Heart right ventricle (tissue), 16 donors: ENCODE measurements at regions of chr2 and their contacts with region 1.

Region 1: DNA sequence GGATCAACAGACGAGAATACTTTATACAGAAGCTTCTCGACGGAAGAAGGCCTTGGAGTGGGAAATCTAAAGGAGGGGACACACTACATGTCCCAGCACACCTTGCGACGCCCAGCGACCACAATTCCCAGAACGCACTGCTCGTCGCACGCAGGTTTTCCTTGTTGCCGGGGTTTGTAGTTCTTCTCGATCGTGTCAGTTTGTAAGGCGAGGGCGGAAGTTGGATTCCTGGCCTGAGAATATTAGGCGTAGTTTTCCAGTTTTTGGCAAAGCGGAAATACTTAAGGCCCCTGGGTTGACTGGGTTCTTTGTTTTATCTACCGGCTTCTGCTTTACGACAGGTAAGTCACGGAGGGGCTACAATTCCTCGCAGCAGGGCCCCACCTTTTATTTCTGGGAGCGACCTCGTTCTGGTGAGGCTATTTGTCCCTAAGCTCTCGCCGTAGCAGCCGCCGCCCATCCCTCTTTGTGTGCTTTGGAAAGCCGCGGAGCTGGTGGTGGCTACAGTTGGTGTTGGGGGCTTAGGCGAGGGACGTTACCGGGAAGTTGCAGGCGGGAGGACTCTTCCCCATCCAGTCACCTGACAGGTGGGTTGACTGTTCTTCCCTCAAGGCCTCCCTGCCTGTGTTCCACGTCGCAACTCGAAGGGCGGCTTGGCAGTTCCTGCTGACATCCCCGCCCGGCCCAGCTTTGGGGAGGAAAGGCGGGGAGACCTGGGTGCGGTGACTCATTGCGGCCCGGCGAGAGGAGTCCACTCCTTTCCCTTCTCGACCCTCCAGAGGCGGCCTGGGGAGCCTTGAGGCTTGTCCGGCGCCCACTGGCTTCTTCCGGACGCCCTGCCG is at the start of gene DYNC1I2:
- DNase-seq: peak; percentile 87 to 94
- ATAC-seq: peak; percentile 97 to 99 (median 99)
- H3K4me3 ChIP-seq: peak within 1 kb of the TSS; percentile 70 to 97 (median 85)
- H3K27ac ChIP-seq: peak within 1 kb of the TSS; percentile 78 to 92 (median 90)
- H3K4me1 ChIP-seq: peaks cover 0 to 33% (median 19%) of the 10 kb centered on the region in 9 donors
- H3K27me3 ChIP-seq: no peaks in the 10 kb centered on the region
- CTCF ChIP-seq: no peak
- total RNA-seq, gene DYNC1I2: 63.3 to 81.4 (median 72.5) TPM

Region 2: DNA sequence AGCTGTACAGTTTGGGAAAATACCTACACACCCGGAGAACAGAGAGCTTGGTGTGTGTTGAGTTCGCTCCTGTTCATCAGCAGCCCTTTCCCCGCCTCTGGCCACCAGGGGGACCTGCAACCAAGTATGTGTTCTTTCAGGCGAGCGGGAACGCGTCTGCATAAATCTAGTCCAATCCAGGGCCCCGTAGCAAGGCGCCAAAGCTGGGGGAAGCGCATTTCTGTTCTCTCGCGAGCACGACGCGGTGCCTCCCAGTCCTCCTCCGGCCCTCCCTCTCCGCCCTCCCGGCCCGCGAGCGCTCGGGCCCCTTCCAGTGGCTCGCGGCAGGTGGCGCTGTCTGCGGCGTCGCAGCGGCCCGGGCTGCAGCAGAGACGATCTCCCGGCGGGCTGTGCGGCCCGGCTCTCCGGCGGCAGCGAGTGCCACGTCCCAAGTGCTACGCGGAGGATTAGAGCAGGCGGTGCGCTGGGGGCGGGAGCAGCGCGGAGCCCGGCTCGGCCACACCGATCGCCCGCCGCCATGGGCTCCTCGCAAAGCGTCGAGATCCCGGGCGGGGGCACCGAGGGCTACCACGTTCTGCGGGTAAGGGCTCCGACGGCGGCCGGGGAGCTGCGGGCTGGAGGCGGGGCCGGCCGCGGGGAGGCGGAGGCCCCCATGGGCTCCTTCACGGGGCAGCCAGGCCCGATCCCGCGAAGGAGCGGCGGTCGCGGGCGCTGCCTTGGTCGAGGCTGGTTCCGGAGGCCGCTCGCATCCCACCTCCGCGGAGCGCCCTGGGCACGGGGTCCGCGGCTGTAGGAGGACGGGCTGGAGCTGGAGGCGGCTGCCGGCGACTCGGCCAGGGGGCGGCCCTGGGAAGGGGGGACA is 758.5 kb before region 1 on chr2 and contains the start of gene GORASP2:
- intact Hi-C with region 1: loop called in 1 of 10 experiments (anchors 5 kb)
- DNase-seq: peak; percentile 97 to 99
- ATAC-seq: peak; percentile 97 to 99 (median 98)
- H3K4me3 ChIP-seq: peak within 1 kb of the TSS; percentile 73 to 98 (median 88)
- H3K27ac ChIP-seq: peak within 1 kb of the TSS; percentile 82 to 98 (median 94)
- H3K4me1 ChIP-seq: peaks cover 3 to 47% (median 38%) of the 10 kb centered on the region in 9 donors
- H3K27me3 ChIP-seq: no peaks in the 10 kb centered on the region
- CTCF ChIP-seq: peak; percentile 93 to 98 (median 97)
- total RNA-seq, gene GORASP2: 54.2 to 74.1 (median 62.1) TPM

Region 3: GRCh38 chr2:171433763-171434670 is 253.5 kb before region 1 on chr2 and contains the starts of genes DCAF17 and METTL8:
- intact Hi-C with region 1: loop called in 1 of 10 experiments (anchors 5 kb)
- DNase-seq: peak; percentile 94 to 96
- ATAC-seq: peak; percentile 98 to 99 (median 99)
- H3K4me3 ChIP-seq: peak within 1 kb of the TSS; percentile 45 to 95 (median 82)
- H3K27ac ChIP-seq: peak within 1 kb of the TSS; percentile 71 to 98 (median 96)
- H3K4me1 ChIP-seq: peaks cover 0 to 21% (median 17%) of the 10 kb centered on the region in 9 donors
- H3K27me3 ChIP-seq: no peaks in the 10 kb centered on the region
- CTCF ChIP-seq: peak in 8 of 9 donors; percentile 19 to 62 (median 42)
- total RNA-seq, gene DCAF17: 6.3 to 10.5 (median 7.8) TPM
- total RNA-seq, gene METTL8: 6.6 to 13.6 (median 11.7) TPM

Region 4: DNA sequence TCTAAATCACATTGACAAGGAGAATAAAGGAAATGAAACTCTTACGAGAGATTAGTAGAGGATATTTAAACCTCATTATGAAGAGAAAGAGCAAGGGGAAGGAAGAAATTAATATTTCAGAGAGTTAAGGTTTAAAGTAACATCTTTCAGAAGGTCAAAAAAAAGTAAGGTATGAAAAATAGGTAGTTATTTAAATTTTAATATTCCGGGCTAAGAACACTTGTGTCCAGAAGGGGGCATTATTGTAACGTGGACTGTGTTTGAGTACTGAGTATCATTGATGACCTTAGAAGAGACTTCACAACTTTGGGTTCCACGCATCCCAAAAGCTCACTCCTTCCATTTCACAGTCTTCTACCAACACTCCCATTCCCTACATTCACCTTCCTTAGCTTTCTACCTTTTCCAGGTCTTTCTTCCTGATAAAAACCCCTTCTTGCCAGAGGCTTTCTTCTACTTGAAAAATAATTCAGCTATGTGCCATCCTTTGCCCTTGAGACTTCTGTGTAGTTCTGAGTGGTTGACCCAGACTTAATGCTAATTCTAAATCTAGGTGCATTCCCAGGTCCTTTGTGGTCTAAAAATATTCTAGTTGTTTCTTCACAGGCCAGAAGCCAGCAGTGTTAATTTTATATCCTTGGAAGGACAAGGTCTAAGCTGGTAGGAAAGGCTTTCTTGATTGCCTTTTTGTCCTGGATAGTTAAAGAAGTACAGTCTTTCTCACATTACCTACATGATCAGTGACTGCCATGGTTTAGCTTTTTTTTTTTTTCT is 16.3 kb after region 1 on chr2:
- intact Hi-C with region 1: loop called in 1 of 10 experiments (anchors 1 kb)
- DNase-seq: no peak
- ATAC-seq: peak in 7 of 8 donors; percentile 28 to 73 (median 59)
- H3K4me3 ChIP-seq: no peak overlapping the region
- H3K27ac ChIP-seq: peak overlapping the region in 7 of 10 donors; percentile 4 to 68 (median 57)
- H3K4me1 ChIP-seq: peaks cover 4 to 52% (median 24%) of the 10 kb centered on the region in 9 donors
- H3K27me3 ChIP-seq: no peaks in the 10 kb centered on the region
- CTCF ChIP-seq: peak; percentile 19 to 61 (median 51)